SK-N-SH (cell line): ENCODE measurements at regions of chr1 and their contacts with region 1.

Region 1: GRCh38 chr1:67561704-67562113 is 123.3 kb upstream of the GADD45A start:
- DNase-seq: peak; percentile 84
- H3K4me3 ChIP-seq: peak overlapping the region in 1 of 2 experiments; percentile 18; a peak in 1 of 4 replicates
- H3K27ac ChIP-seq: no peak overlapping the region
- H3K4me1 ChIP-seq: peaks cover 0 to 6% of the 10 kb centered on the region in 2 experiments; a peak in 1 of 4 replicates
- H3K27me3 ChIP-seq: no peaks in the 10 kb centered on the region
- CTCF ChIP-seq: peak; percentile 94
- EP300 ChIP-seq: no peak; a peak in 1 of 4 replicates
- RAD21 ChIP-seq: peak; percentile 96

Region 2: DNA sequence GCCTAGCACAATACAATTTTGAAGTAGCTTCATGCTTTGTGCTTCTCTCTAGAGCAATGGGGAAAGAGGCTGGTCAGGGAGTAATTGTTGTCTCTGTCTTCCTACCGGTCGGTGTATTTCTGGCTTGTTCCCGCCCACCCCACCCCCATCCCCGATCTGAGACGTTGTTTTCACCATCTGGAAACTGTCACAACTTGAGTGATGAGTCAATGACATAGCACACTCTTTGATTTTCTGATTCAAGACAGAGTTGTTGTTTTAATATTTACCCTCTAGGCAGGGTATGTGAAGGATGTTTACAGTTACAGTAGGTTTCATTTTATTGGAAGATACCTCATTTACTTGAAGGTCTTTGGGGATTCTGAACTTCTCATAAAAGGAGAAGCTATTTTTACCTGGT is 247.0 kb before region 1 on chr1:
- CTCF ChIA-PET with region 1: no interaction called
- POLR2A ChIA-PET with region 1: no interaction called
- DNase-seq: peak; percentile 12
- H3K4me3 ChIP-seq: no peak overlapping the region
- H3K27ac ChIP-seq: no peak overlapping the region
- H3K4me1 ChIP-seq: no peaks in the 10 kb centered on the region
- H3K27me3 ChIP-seq: no peaks in the 10 kb centered on the region; the same call in 1 of the 2 replicates
- CTCF ChIP-seq: no peak
- EP300 ChIP-seq: no peak
- RAD21 ChIP-seq: no peak

Region 3: DNA sequence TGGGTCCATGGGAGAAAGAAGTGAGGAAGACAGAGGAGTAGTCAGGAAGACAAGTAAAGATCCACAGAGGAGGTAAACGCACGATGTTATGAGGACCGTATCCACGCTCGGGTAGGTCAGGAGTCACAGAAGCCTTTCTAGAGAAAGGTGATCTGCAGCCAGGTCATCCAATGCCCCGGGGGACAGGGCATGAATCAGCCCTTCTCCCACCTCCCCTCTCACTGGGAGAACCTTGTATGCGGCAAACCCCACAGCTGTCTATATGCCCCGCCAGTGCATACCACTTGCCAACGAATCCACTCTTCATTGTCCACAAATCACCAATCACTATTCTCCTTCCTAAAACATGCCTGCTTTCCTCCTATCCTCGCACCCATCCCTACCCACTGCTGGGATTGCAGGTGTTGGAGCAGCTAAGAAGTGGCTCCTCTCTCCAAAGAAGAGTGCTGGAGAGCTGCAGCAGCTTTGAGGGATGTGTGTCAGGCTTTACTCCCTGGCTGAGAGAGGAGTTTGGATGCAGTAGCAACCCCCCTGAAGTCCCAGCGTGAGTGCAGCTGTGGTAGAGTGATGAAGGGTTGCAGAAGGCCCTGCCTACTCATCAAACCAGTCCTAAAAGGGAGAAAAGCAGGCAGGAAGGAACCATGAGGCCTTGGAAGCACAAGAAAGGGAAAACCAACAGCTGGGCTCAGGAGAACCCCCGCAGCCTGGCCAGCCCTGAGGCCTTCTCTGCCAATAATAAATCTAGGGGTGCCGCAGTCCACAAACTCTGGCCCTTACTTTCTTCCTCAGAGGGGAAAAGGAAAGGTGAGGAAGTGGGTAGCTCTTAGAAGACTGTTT is 21.1 kb after region 1 on chr1:
- CTCF ChIA-PET with region 1: interaction called, 28 read pairs
- POLR2A ChIA-PET with region 1: no interaction called
- DNase-seq: no peak
- H3K4me3 ChIP-seq: no peak overlapping the region
- H3K27ac ChIP-seq: no peak overlapping the region
- H3K4me1 ChIP-seq: peaks cover 0 to 1% of the 10 kb centered on the region in 2 experiments; a peak in 2 of 4 replicates
- H3K27me3 ChIP-seq: no peaks in the 10 kb centered on the region
- CTCF ChIP-seq: no peak
- EP300 ChIP-seq: no peak
- RAD21 ChIP-seq: no peak

Region 4: GRCh38 chr1:67632811-67633655 is 71.3 kb after region 1 on chr1:
- CTCF ChIA-PET with region 1: interaction called, 10 read pairs
- POLR2A ChIA-PET with region 1: no interaction called
- DNase-seq: peak; percentile 12
- H3K4me3 ChIP-seq: no peak overlapping the region
- H3K27ac ChIP-seq: no peak overlapping the region
- H3K4me1 ChIP-seq: peaks cover 16 to 21% of the 10 kb centered on the region in 2 experiments; a peak in 2 of 4 replicates
- H3K27me3 ChIP-seq: no peaks in the 10 kb centered on the region
- CTCF ChIP-seq: no peak
- EP300 ChIP-seq: no peak
- RAD21 ChIP-seq: no peak

Region 5: GRCh38 chr1:67674260-67675011 is 112.7 kb after region 1 on chr1:
- CTCF ChIA-PET with region 1: interaction called, 12 read pairs
- POLR2A ChIA-PET with region 1: no interaction called
- DNase-seq: peak; percentile 75
- H3K4me3 ChIP-seq: no peak overlapping the region; a peak in 1 of 4 replicates
- H3K27ac ChIP-seq: peak overlapping the region; percentile 38 to 81; a peak in 3 of 4 replicates
- H3K4me1 ChIP-seq: peaks cover 13 to 16% of the 10 kb centered on the region in 2 experiments; a peak in 3 of 4 replicates
- H3K27me3 ChIP-seq: no peaks in the 10 kb centered on the region
- CTCF ChIP-seq: no peak
- EP300 ChIP-seq: peak; percentile 9 to 73; a peak in 2 of 4 replicates
- RAD21 ChIP-seq: no peak

Region 6: DNA sequence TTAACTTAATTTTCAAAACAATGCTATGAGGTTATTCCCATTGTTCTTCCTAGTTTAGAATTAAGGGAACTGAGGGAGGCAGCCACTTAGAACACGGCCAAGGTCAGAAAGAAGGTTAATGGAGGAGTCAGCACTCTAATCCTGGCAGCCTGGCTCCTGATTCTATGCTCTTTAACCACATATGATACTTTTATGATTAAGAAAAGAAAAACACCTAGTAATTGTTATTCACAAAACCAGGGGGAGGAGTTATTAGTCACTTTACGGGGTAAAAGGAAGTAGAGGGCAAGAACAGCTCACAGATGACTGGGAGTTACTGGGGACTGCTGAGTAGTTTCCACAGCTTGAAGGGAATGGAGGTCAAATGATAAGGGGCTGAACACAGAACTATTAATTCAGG is 161.9 kb after region 1 on chr1:
- CTCF ChIA-PET with region 1: interaction called, 14 read pairs
- POLR2A ChIA-PET with region 1: no interaction called
- DNase-seq: no peak
- H3K4me3 ChIP-seq: no peak overlapping the region
- H3K27ac ChIP-seq: peak overlapping the region; percentile 83 to 95; a peak in 3 of 4 replicates
- H3K4me1 ChIP-seq: peaks cover 39 to 44% of the 10 kb centered on the region in 2 experiments
- H3K27me3 ChIP-seq: no peaks in the 10 kb centered on the region
- CTCF ChIP-seq: no peak
- EP300 ChIP-seq: peak in 1 of 2 experiments; percentile 39; a peak in 1 of 4 replicates
- RAD21 ChIP-seq: no peak

Region 7: DNA sequence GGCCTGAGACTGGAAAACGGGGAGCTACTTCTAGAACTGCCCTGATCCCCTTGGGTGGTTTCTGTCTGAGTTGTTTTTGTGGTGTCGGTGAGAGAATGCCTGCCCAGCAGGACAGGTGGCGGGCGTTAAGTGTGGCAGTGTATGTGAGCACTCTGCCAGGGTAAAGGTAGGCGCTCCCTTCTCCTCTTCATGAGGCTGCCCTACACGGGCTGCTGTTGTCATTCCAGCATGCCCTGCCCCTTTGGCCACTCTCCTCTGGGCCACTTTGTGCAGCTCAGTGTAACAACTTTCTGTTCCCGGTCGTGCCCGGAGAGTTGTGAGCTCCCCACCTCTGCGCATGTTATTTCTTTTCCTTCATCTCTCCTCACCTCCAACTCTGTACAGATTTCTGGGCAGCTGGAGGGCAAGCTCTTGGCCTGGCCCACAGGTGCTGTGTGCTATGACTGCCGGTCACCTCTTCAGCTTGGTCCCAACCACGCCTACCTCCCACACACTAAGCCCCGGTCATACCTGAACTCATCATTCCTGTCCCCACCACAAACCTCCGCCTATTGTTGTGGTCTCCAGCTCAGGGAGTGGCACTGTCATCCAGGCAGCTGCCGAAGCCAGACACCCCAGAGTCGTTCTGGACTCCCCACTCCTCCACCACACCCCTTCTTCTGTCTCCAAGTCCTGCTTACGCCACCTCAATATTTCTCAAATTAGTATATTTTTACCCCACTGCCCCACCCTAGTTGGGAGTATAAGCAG is 192.2 kb after region 1 on chr1:
- CTCF ChIA-PET with region 1: interaction called, 216 read pairs
- POLR2A ChIA-PET with region 1: interaction called, 3 read pairs
- DNase-seq: no peak
- H3K4me3 ChIP-seq: no peak overlapping the region
- H3K27ac ChIP-seq: peak overlapping the region in 1 of 2 experiments; percentile 10; a peak in 1 of 4 replicates
- H3K4me1 ChIP-seq: peaks cover 7 to 30% of the 10 kb centered on the region in 2 experiments
- H3K27me3 ChIP-seq: no peaks in the 10 kb centered on the region
- CTCF ChIP-seq: no peak
- EP300 ChIP-seq: no peak
- RAD21 ChIP-seq: no peak